Mammary epithelial cell (primary cell): ENCODE measurements at regions of chr17 and their contacts with region 1.

Region 1: GRCh38 chr17:77382966-77383612 is 242.3 kb downstream of the SEC14L1 start:
- DNase-seq: peak; percentile 54
- H3K4me3 ChIP-seq: no peak overlapping the region
- H3K27ac ChIP-seq: no peak overlapping the region
- H3K4me1 ChIP-seq: peaks cover 53% of the 10 kb centered on the region
- H3K27me3 ChIP-seq: no peaks in the 10 kb centered on the region
- CTCF ChIP-seq: no peak

Region 2: DNA sequence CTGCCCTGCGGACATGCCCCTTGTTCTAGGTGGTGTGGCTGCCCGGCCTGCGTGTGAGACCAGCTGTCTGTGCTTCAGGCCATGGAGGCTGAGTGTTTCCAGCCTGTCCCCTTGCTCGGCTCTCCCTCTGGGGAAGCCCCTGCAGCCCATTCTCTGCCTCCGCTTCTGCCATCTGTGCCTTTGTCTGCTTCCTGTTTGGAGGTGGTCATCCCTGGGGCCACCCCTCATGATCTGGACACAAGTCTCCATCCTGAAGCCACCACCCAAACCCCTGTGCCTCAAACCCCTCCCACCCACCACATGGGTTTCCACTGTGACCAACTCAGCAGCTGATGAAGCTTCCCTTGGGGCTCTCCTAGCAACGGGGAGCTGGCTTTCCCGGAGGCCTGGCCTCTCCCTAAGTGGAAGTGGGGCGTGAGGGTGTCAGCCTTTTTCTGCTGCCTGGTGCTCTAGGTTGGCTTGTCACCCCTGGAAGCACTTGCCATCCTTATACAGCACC is 57.5 kb before region 1 on chr17:
- CTCF ChIA-PET with region 1: no interaction called
- dilution Hi-C with region 1: loop called (anchors 5 kb)
- in situ Hi-C with region 1: no loop called
- intact Hi-C with region 1: loop called (anchors 2 kb)
- DNase-seq: no peak
- H3K4me3 ChIP-seq: no peak overlapping the region
- H3K27ac ChIP-seq: no peak overlapping the region
- H3K4me1 ChIP-seq: peaks cover 64% of the 10 kb centered on the region
- H3K27me3 ChIP-seq: no peaks in the 10 kb centered on the region
- CTCF ChIP-seq: no peak

Region 3: DNA sequence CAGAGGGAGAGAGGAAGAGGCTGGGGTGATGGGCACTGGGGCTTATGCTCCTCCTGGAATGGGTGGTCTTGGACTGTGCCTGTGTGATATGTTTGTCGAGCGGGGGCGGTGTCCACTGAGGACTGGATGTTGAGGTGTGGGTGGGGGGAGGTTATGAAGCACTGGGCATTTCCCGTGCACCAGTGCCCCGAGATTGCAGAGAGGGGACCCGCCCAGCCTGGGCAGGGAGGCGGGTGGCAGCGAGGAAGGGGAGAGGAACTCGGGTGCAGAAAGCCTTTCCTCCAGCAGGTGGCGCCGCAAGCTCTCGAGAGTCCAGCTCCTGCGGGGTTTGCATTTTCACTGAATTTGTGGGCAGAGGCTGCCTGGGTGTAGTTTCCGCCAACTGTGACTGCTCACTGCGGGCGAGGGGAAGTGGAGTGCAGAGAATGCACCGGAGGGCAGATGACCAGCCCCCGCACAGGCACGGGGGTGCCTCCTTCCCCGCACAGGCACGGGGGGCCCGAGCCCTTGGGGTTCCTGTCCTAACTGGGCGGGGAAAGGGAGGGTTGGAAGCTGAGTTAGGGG is 51.7 kb before region 1 on chr17:
- CTCF ChIA-PET with region 1: no interaction called
- dilution Hi-C with region 1: loop called (anchors 5 kb)
- in situ Hi-C with region 1: no loop called
- intact Hi-C with region 1: loop called (anchors 2 kb)
- DNase-seq: peak; percentile 74
- H3K4me3 ChIP-seq: no peak overlapping the region
- H3K27ac ChIP-seq: peak overlapping the region; percentile 36
- H3K4me1 ChIP-seq: peaks cover 50% of the 10 kb centered on the region
- H3K27me3 ChIP-seq: no peaks in the 10 kb centered on the region
- CTCF ChIP-seq: peak; percentile 72 to 95